Right cardiac atrium (tissue), 5 donors: ENCODE measurements at regions of chr15 and their contacts with region 1.

Region 1: DNA sequence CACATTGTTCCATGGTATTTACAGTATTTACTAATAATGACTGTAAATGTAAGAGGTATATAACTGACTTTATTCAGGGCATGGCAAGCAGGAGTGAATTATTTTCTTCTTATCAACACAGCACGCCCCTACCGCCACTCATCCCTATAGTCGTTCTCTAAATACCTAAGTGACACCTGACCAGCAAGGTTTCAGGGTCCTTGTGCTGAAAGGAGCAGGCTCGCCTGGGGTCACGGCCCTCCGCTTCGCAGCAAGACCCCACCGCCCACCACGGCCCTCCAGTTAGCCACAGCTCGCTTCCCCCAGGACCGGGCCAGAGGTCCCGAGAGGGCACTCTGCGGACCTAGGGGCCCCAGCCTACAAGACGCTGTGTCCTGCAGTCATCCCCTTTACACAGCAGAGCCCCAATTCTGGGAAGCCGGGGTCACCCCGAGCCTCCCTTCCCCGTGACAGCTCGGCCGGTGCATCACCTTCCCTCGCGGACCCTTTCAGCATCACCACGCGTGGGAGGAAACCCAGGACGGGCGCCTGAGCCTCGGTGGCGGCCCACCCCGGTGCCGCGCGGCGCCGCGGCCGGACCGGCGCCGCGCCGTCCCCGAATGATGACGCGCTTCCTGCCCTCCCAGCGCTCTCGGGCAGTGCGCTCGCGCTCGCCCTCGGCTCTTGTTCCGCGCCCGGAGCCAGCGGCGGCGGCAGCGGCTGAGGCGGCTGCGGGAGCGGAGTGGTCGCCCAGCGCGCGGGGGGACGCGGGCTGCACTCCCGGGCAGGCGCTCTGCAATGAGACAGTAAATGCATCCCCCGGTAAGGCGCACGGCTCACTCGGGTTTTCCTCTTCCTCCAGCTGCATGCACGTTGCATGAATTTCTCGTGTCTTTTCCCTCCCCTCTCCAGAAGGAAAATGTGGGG is 225.1 kb upstream of the C2CD4B start:
- DNase-seq: peak; percentile 72 to 90 (median 89)
- ATAC-seq: peak; percentile 90 to 92
- H3K4me3 ChIP-seq: peak within 1 kb of the TSS; percentile 92
- H3K27ac ChIP-seq: peak within 1 kb of the TSS; percentile 49
- H3K4me1 ChIP-seq: peaks cover 6% of the 10 kb centered on the region
- H3K27me3 ChIP-seq: no peaks in the 10 kb centered on the region

Region 2: DNA sequence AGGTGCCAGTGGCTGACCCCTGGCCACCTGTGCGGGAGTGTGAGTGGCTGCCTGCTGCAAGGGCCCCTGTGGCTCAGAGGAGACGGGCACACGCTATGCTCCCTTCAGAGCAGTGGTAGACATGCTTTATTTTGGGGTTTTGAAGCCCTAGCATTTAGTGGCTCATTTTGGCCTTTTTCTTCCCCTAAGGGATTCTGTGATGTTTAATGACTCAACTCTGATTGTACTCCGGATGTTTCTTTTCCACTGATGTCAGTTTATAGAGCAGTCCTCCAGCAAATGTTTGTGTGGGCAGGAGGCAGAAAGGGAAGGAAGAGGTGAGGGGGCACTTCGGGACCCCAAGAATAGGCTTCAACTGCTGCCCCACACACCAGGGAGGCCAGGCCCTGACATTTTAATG is 63.8 kb after region 1 on chr15:
- intact Hi-C with region 1: loop called in 2 of 4 experiments (anchors 10 kb)
- DNase-seq: no peak
- ATAC-seq: peak; percentile 9 to 65
- H3K4me3 ChIP-seq: no peak overlapping the region
- H3K27ac ChIP-seq: peak overlapping the region; percentile 79
- H3K4me1 ChIP-seq: peaks cover 37% of the 10 kb centered on the region
- H3K27me3 ChIP-seq: no peaks in the 10 kb centered on the region

Region 3: DNA sequence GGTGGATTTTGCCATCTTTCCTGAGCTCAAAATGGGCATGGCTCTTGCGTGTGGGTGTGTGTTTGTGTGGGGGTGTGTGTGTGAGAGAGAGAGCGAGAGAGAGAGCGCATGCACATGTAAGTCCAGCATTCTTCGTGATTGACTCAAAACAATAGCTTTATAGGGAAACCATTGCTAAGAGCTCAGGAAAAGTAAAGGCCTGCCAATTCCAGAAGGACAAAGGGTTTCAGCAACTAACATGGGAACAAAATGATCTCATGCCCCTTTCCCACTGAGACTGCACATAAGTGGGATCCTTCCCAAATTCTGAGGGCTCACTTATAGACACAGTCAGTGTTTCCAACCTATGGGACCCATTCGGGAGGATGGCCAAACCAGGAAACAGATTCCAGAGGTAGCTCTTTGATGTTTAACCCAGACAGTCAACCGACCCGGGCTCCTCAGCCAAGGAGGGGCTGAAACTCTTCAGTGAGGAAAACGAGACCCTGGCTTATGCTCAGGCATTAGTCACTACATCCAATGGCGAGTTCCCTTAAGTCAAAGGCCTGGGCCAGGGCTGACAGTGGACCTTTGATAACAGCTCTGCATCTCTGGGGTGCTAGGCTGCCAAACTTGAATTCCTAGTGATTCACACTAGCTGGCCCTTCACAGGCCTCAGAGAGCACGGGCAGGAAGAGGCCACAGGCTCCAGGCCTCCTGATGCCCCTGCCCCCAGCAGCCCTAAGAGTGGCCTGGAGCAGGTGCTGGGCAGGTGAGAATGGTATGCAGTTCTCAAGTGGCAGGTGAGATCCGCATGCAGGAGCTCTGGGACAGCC is 79.9 kb after region 1 on chr15:
- intact Hi-C with region 1: loop called in 1 of 4 experiments (anchors 10 kb)
- DNase-seq: peak; percentile 78 to 88 (median 84)
- ATAC-seq: peak; percentile 89 to 91
- H3K4me3 ChIP-seq: no peak overlapping the region
- H3K27ac ChIP-seq: peak overlapping the region; percentile 92
- H3K4me1 ChIP-seq: peaks cover 24% of the 10 kb centered on the region
- H3K27me3 ChIP-seq: no peaks in the 10 kb centered on the region

Region 4: GRCh38 chr15:62506217-62506805 is 116.2 kb after region 1 on chr15:
- intact Hi-C with region 1: loop called in 1 of 4 experiments (anchors 10 kb)
- DNase-seq: no peak
- ATAC-seq: peak; percentile 64 to 67
- H3K4me3 ChIP-seq: no peak overlapping the region
- H3K27ac ChIP-seq: peak overlapping the region; percentile 98
- H3K4me1 ChIP-seq: peaks cover 19% of the 10 kb centered on the region
- H3K27me3 ChIP-seq: no peaks in the 10 kb centered on the region

Region 5: DNA sequence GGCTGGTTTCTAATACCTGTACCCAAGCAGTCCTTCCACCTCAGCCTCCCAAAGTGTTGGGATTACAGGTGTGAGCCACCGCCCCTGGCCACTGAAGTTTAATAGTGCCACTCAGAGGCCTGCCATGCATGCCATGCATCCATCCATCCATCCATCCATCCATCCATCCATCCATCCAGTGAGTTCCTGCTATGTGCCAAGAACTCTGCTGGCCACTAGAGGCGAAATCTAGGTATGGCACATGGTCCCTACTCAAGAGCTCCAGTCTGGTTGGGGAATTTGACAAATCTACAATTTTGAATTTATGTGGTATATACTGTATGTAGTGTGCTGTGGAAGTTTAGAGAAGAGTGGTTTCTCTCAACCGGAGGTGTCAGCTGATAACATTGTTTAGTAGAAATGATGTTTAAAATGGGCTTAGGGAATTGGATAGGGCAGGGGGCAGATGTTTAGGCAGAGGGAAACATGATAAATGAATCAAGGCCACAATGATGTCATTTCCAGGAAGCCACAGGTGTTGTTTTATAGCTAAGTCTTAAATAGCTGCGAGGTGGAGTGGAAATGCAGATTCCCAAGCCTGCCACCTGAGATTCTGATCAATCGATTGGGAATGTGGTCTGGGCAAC is 159.3 kb after region 1 on chr15:
- intact Hi-C with region 1: loop called in 2 of 4 experiments (anchors 5 to 10 kb)
- DNase-seq: peak in 1 of 3 donors; percentile 58
- ATAC-seq: no peak
- H3K4me3 ChIP-seq: no peak overlapping the region
- H3K27ac ChIP-seq: no peak overlapping the region
- H3K4me1 ChIP-seq: peaks cover 13% of the 10 kb centered on the region
- H3K27me3 ChIP-seq: no peaks in the 10 kb centered on the region

Region 6: GRCh38 chr15:62742409-62743171 is 352.5 kb after region 1 on chr15:
- intact Hi-C with region 1: loop called in 1 of 4 experiments (anchors 10 kb)
- DNase-seq: peak; percentile 81 to 85 (median 85)
- ATAC-seq: peak; percentile 79 to 85
- H3K4me3 ChIP-seq: no peak overlapping the region
- H3K27ac ChIP-seq: peak overlapping the region; percentile 46
- H3K4me1 ChIP-seq: peaks cover 12% of the 10 kb centered on the region
- H3K27me3 ChIP-seq: no peaks in the 10 kb centered on the region